GM18951 (cell line): ENCODE measurements at regions of chr3 and their contacts with region 1.

Region 1: GRCh38 chr3:133457465-133458067 is 57.7 kb downstream of the BFSP2 start:
- POLR2A ChIP-seq: no peak

Region 2: GRCh38 chr3:133573054-133573628 is 115.6 kb after region 1 on chr3:
- in situ Hi-C with region 1: loop called (anchors 10 kb)
- POLR2A ChIP-seq: peak; percentile 73